Activated CD4-positive, alpha-beta memory T cell treated with anti-CD3 and anti-CD28 coated beads for 36 hours (primary cell): ENCODE measurements at regions of chr3 and their contacts with region 1.

Region 1: DNA sequence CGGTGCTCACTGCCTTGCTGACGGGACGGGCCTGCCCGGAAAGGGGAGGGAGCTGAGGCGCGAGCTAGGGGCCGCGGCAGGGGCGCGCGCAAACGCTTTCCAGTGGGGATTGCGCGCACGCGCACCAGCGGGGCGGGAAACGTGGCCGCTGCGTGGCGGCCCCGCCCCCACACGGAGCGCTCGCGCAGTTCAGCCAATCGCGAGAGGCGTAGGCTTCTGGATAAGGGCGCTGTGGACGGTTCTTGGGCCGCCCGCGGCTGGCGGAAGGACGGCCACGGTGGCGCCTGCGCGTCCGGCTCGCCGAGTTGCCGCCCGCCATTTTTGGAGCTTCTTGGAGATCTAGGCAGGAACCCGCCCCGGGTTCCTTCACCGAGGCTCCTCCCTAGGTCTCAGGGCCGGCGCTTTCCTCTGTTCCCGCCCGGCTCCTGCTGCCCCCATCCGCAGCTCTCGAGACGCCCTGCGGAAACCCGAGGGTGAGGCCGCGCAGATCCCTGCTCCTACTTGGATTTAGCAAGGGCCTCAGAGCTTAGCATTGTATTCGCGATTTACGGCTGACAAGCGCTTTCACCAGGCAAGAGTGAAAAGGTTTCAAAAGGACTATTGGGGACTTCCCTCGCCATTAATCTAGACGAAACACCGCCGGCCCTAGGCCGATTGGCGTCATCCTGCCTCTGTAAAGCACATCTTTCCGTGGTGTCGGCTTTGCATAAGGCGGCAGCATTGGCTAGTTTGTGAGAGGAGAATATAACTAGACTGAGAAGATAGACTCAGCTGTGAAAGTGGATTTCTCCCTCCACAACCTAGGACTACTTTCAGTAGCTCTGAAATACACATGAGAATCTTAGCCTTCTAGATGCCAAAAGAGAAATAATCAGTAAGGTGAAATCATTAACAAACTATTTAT is 496 bp upstream of the STAG1 start:
- DNase-seq: peak; percentile 99
- H3K4me3 Mint-ChIP-seq: peak overlapping the region; percentile 77
- H3K27ac Mint-ChIP-seq: peak overlapping the region; percentile 92
- H3K4me1 Mint-ChIP-seq: peaks cover 36% of the 10 kb centered on the region
- H3K27me3 Mint-ChIP-seq: no peaks in the 10 kb centered on the region

Region 2: DNA sequence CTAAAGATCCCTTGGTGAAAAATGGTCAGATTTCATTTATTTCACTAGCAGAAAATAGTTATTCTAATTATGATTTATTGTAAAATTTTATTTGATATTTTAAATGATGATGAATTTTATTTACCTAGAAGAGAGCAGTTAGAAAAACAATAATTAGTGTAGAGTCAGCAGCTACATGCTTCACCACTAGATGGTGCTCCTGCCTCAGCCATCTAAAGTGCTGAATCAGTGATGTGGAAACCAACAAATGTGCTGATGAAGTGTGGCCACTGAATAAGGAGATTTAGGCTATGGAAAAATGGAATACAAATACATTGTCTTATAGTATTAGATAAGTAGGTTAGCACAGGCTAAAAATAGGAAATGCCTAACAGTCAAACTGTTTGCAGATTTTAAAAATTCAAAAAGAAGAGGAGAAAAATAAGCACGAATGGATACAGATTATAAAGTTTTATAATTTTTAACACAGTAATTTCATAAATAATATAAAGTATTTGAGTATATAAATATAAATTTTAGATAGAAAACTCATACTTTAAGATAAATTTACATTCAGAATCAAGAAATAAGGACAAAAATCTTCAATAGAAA is 677.4 kb before region 1 on chr3:
- CTCF ChIA-PET with region 1: interaction called, 27 read pairs
- POLR2A ChIA-PET with region 1: no interaction called
- intact Hi-C with region 1: loop called (anchors 1 kb)
- DNase-seq: peak; percentile 82
- H3K4me3 Mint-ChIP-seq: no peak overlapping the region
- H3K27ac Mint-ChIP-seq: no peak overlapping the region
- H3K4me1 Mint-ChIP-seq: peaks cover 2% of the 10 kb centered on the region
- H3K27me3 Mint-ChIP-seq: no peaks in the 10 kb centered on the region

Region 3: DNA sequence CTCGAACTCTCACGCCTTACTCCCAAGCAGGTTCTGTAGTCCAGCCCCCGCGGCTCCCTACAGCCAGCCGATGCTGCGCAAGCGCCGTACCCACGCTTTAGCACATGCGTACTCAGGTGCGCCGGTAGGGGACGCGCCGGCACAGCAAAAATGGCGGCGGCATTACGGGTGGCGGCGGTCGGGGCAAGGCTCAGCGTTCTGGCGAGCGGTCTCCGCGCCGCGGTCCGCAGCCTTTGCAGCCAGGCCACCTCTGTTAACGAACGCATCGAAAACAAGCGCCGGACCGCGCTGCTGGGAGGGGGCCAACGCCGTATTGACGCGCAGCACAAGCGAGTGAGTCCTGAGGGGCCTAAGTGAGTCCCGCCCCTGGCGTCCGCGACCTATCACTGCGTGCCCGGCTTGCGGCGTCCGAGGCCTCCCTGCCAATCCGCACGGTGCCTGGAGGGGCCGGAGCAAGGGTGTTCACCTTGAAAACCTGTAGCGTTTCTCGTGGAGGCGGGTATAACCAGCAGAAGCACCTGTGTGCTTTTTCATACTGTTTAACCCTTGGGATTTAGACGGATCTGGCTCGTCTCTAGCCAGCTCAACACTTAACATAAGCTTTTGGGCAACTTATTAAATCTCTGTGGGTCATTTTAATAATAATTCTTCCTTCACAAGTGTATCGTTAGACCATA is 502.3 kb before region 1 on chr3 and contains the start of gene PCCB:
- CTCF ChIA-PET with region 1: interaction called, 11 read pairs
- POLR2A ChIA-PET with region 1: interaction called, 4 read pairs
- intact Hi-C with region 1: loop called (anchors 1 kb)
- DNase-seq: peak; percentile 95
- H3K4me3 Mint-ChIP-seq: peak within 1 kb of the TSS; percentile 86
- H3K27ac Mint-ChIP-seq: peak within 1 kb of the TSS; percentile 88
- H3K4me1 Mint-ChIP-seq: peaks cover 18% of the 10 kb centered on the region
- H3K27me3 Mint-ChIP-seq: no peaks in the 10 kb centered on the region
- total RNA-seq, gene PCCB: 54.5 to 58.9 TPM

Region 4: GRCh38 chr3:136385457-136385856 is 367.2 kb before region 1 on chr3:
- CTCF ChIA-PET with region 1: interaction called, 74 read pairs
- POLR2A ChIA-PET with region 1: no interaction called
- intact Hi-C with region 1: no loop called
- DNase-seq: no peak
- H3K4me3 Mint-ChIP-seq: no peak overlapping the region
- H3K27ac Mint-ChIP-seq: no peak overlapping the region
- H3K4me1 Mint-ChIP-seq: peaks cover 6% of the 10 kb centered on the region
- H3K27me3 Mint-ChIP-seq: no peaks in the 10 kb centered on the region

Region 5: GRCh38 chr3:136728918-136729317 is 23.8 kb before region 1 on chr3:
- CTCF ChIA-PET with region 1: interaction called, 20 read pairs
- POLR2A ChIA-PET with region 1: interaction called, 6 read pairs
- intact Hi-C with region 1: loop called (anchors 1 kb)
- DNase-seq: no peak
- H3K4me3 Mint-ChIP-seq: no peak overlapping the region
- H3K27ac Mint-ChIP-seq: peak overlapping the region; percentile 16
- H3K4me1 Mint-ChIP-seq: peaks cover 58% of the 10 kb centered on the region
- H3K27me3 Mint-ChIP-seq: no peaks in the 10 kb centered on the region

Region 6: DNA sequence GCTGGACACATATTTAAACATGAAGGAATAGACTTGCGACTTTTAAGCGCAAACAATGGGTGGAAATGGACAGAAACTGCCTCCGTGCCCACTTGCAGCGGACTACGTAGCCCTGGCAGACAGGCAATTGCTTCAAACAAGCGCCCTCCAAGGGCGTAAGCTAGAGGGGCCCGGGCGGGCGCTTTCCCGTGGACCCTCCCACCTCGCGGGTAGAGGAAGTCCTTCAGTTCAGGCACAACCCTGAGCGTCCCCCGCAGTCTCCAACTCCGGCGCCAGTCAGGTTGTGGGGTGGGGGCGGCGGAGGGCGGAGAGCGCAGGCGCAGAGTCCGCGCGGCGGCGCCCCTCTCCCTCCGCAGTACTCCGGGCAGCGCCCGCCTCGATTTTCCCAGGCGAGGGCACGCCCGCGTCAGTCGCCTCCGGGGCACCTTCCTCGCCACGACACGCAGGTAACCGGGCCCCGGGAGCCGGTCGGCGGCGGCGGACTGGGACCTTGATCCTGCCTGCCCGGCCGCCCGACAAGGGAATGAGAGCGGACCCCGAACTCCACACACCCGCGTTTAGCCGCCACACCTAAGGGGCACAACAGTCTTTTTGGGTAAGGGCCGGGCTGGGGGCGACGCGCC is 66.2 kb after region 1 on chr3 and contains the start of gene SLC35G2:
- CTCF ChIA-PET with region 1: interaction called, 4 read pairs
- POLR2A ChIA-PET with region 1: interaction called, 3 read pairs
- intact Hi-C with region 1: loop called (anchors 1 kb)
- DNase-seq: peak; percentile 50
- H3K4me3 Mint-ChIP-seq: peak within 1 kb of the TSS; percentile 78
- H3K27ac Mint-ChIP-seq: no peak within 1 kb of the TSS
- H3K4me1 Mint-ChIP-seq: peaks cover 19% of the 10 kb centered on the region
- H3K27me3 Mint-ChIP-seq: peaks cover 34% of the 10 kb centered on the region
- total RNA-seq, gene SLC35G2: 2.1 to 2.9 TPM

Region 7: GRCh38 chr3:137013955-137014688 is 261.4 kb after region 1 on chr3:
- CTCF ChIA-PET with region 1: interaction called, 192 read pairs
- POLR2A ChIA-PET with region 1: interaction called, 9 read pairs
- intact Hi-C with region 1: loop called (anchors 1 kb)
- DNase-seq: peak; percentile 89
- H3K4me3 Mint-ChIP-seq: peak overlapping the region; percentile 55
- H3K27ac Mint-ChIP-seq: no peak overlapping the region
- H3K4me1 Mint-ChIP-seq: peaks cover 7% of the 10 kb centered on the region
- H3K27me3 Mint-ChIP-seq: no peaks in the 10 kb centered on the region